CD8-positive, alpha-beta memory T cell (primary cell): ENCODE measurements at regions of chr9 and their contacts with region 1.

Region 1: GRCh38 chr9:31542384-31543055 is 841.9 kb upstream of the ACO1 start:
- DNase-seq: peak in 3 of 5 donors; percentile 6 to 51 (median 29)
- H3K4me3 ChIP-seq: no peak overlapping the region
- H3K4me3 Mint-ChIP-seq: peak overlapping the region in 4 of 7 donors; percentile 40 to 67 (median 50)
- H3K27ac ChIP-seq: no peak overlapping the region
- H3K27ac Mint-ChIP-seq: peak overlapping the region in 6 of 8 donors; percentile 2 to 84 (median 57)
- H3K4me1 ChIP-seq: no peaks in the 10 kb centered on the region
- H3K4me1 Mint-ChIP-seq: peaks cover 18 to 27% (median 25%) of the 10 kb centered on the region in 3 donors
- H3K27me3 ChIP-seq: no peaks in the 10 kb centered on the region
- H3K27me3 Mint-ChIP-seq: no peaks in the 10 kb centered on the region

Region 2: DNA sequence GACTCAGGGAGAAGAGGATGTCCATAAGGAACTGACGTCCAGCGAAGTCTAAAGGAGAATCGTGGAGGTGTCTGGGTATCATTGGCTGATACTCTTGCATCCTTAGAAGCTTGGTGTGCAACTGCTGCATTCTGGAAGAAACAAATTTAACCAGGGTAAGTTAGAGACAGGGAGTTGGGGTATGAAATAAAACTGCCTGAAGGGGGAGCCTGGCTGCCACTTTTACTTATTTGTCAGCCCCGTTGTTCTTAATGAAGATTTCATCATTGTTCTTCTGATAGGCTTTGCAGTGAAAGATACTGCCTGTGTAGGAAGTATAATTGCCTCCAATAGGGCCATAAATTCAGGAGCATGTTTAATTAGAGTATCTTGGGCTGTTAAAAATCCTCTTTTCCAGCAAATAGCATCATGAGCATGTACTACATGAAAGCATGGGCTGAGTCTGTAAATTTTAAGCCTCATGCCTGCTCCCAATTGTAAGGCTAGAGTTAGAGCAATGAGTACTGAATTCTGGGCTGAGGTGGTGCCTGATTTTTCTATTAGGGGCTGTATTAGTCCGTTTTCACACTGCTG is 422.6 kb before region 1 on chr9:
- CTCF ChIA-PET with region 1: interaction called, 12 read pairs
- POLR2A ChIA-PET with region 1: no interaction called
- DNase-seq: peak in 3 of 5 donors; percentile 49 to 51 (median 51)
- H3K4me3 ChIP-seq: no peak overlapping the region
- H3K4me3 Mint-ChIP-seq: no peak overlapping the region
- H3K27ac ChIP-seq: no peak overlapping the region
- H3K27ac Mint-ChIP-seq: peak overlapping the region in 1 of 8 donors; percentile 4
- H3K4me1 ChIP-seq: peaks cover 6% of the 10 kb centered on the region
- H3K4me1 Mint-ChIP-seq: peaks cover 6 to 9% (median 7%) of the 10 kb centered on the region in 3 donors
- H3K27me3 ChIP-seq: no peaks in the 10 kb centered on the region
- H3K27me3 Mint-ChIP-seq: peaks cover 0 to 2% of the 10 kb centered on the region in 2 donors

Region 3: DNA sequence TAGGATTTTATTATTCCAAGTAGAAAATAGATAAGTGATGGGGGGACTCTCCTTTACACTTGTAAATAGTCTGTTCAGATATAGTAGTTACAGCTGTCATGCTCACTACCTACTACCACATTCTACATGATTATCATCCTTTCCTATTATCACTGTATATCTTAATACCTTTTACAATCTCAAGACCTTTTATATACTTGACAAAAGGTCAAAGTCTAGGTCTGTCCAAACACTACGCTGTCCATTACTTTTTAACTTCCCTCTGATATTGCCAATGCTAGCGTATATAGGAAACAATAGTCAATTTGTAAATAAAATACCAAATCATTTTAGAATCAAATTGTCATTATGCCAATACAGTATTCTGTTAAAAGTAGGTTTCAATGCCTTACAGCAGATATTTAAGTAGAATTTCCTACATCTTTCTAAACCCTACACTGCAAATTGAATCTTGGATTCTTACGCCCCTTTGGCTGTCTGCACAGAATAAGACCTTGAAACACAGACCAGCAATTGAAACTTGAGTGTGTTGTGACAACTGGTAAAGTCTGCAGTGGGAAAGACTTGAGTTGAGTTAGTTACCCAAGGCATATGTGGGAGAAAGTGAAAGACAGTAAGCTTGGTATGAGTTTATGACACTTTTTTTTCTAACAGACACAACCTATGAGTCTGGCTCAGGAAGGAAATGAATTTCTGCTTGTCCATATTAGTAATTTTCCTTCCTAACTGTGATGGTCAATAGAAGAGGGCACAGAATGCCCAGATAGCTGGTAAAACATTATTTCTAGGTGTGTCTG is 14.3 kb after region 1 on chr9:
- CTCF ChIA-PET with region 1: no interaction called
- POLR2A ChIA-PET with region 1: no interaction called
- DNase-seq: no peak
- H3K4me3 ChIP-seq: no peak overlapping the region
- H3K4me3 Mint-ChIP-seq: no peak overlapping the region
- H3K27ac ChIP-seq: no peak overlapping the region
- H3K27ac Mint-ChIP-seq: no peak overlapping the region
- H3K4me1 ChIP-seq: no peaks in the 10 kb centered on the region
- H3K4me1 Mint-ChIP-seq: peaks cover 0 to 4% (median 0%) of the 10 kb centered on the region in 3 donors
- H3K27me3 ChIP-seq: no peaks in the 10 kb centered on the region
- H3K27me3 Mint-ChIP-seq: no peaks in the 10 kb centered on the region

Region 4: GRCh38 chr9:31683116-31683515 is 140.6 kb after region 1 on chr9:
- CTCF ChIA-PET with region 1: no interaction called
- POLR2A ChIA-PET with region 1: no interaction called
- DNase-seq: no peak
- H3K4me3 ChIP-seq: no peak overlapping the region
- H3K4me3 Mint-ChIP-seq: no peak overlapping the region
- H3K27ac ChIP-seq: no peak overlapping the region
- H3K27ac Mint-ChIP-seq: no peak overlapping the region
- H3K4me1 ChIP-seq: no peaks in the 10 kb centered on the region
- H3K4me1 Mint-ChIP-seq: no peaks in the 10 kb centered on the region
- H3K27me3 ChIP-seq: no peaks in the 10 kb centered on the region
- H3K27me3 Mint-ChIP-seq: no peaks in the 10 kb centered on the region